ENCODE measurements at regions of chr6 and their contacts with region 1.

Region 1: GRCh38 chr6:27126815-27127537 is 120.5 kb upstream of the PRSS16 start:
- DNase-seq: peak; percentile 93
- ATAC-seq: peak; percentile 68
- H3K4me3 Mint-ChIP-seq: peak overlapping the region; percentile 77
- H3K27ac Mint-ChIP-seq: peak overlapping the region; percentile 95
- H3K4me1 Mint-ChIP-seq: peaks cover 43% of the 10 kb centered on the region
- H3K27me3 Mint-ChIP-seq: no peaks in the 10 kb centered on the region

Region 2: DNA sequence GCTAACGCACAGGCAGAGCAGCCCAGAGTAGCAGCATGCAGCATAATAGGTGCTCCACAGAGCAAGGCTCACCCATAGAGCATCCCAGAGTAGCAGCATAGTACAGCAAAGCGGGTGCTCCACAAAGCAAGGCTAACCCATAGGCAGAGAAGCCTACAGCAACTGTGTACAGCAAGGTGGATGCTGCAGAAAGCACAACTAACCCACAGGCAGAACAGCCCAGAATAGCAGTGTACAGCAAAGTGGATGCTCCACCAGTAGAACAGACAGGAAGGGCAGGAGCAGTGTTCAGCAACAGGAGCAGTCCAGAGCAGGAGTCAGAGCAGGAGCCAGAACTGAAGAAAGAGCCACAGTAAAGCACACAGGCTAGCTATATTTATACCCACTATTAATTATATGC is 12.2 kb before region 1 on chr6:
- CTCF ChIA-PET with region 1: no interaction called
- DNase-seq: no peak
- ATAC-seq: no peak
- H3K4me3 Mint-ChIP-seq: no peak overlapping the region
- H3K27ac Mint-ChIP-seq: no peak overlapping the region
- H3K4me1 Mint-ChIP-seq: no peaks in the 10 kb centered on the region
- H3K27me3 Mint-ChIP-seq: peaks cover 10% of the 10 kb centered on the region

Region 3: DNA sequence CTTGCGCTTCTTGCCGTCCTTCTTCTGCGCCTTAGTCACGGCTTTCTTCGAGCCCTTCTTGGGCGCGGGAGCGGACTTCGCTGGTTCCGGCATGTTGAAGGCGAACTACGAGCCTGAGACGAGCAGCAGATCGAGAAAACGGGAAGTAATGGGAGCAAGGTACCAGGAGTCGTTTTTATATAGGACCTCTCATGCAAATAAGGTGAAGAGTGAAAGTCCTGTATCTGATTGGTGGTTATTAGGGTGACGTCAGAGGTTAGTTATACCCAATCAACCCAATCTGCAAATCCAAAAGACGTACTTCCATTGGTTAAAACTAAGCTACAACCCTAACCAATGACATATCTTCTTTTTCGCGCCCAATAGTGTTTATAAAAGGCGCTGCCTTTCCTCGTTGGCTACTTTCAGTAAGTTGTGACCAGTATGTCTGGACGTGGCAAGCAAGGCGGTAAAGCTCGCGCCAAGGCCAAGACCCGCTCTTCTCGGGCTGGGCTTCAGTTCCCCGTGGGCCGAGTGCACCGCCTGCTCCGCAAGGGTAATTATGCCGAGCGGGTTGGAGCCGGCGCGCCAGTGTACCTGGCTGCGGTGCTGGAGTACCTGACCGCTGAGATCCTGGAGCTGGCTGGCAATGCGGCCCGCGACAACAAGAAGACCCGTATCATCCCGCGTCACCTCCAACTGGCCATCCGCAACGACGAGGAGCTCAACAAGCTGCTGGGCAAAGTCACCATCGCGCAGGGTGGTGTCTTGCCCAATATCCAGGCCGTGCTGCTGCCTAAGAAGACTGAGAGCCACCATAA is 19.9 kb after region 1 on chr6:
- CTCF ChIA-PET with region 1: interaction called, 42 read pairs
- DNase-seq: peak; percentile 92
- ATAC-seq: peak; percentile 68
- H3K4me3 Mint-ChIP-seq: no peak overlapping the region
- H3K27ac Mint-ChIP-seq: no peak overlapping the region
- H3K4me1 Mint-ChIP-seq: peaks cover 25% of the 10 kb centered on the region
- H3K27me3 Mint-ChIP-seq: no peaks in the 10 kb centered on the region

Region 4: DNA sequence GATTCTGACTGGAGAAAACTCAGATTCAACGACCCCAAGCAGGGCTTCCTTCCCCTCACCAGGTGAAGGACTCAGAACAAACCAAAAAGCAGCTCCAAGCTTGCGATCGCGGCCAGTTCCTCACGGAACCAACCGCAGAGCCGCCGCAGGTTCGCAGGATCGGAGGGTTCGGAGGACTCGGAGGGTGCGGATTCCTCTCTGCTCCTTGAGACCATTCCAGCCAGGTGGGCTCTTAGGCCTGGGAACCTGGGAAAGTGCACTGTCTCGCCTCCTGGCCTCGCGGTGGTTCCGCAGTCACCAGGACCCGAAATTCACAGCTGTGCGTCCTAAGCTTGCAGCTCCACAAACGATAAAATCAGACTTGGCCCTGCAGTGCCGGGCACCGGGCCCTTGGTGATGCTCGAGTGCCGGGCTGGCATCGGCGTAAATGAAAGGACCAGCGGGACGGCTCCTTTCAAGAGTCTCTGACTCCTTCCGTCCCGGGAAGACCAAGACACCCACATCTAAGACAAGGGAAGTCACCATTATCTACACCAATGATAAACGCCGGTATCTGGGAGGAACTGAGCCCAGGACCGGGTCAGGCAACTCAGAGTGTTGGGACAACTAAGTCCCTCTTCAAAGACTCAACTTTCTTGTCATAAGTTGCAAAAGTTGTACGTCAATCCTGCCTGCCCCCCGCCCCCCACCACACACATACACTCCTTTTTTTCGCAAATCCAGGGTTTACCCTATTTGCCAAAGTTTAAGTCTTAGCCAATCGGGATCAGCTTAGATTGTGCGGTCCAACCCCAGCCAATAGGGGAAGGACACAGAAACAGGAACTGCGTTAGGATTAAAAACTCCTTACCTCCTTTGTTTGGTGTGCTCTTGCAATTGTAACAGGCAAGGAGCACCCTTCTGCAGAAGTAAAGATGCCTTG is 50.8 kb after region 1 on chr6:
- CTCF ChIA-PET with region 1: interaction called, 19 read pairs
- DNase-seq: peak; percentile 87
- ATAC-seq: peak; percentile 86
- H3K4me3 Mint-ChIP-seq: peak overlapping the region; percentile 91
- H3K27ac Mint-ChIP-seq: peak overlapping the region; percentile 88
- H3K4me1 Mint-ChIP-seq: peaks cover 11% of the 10 kb centered on the region
- H3K27me3 Mint-ChIP-seq: peaks cover 34% of the 10 kb centered on the region

Measured in activated CD8-positive, alpha-beta memory T cell treated with anti-CD3 and anti-CD28 coated beads, Interleukin-2, amount 10 ng/mL, durations not matched to agents 7 days and 5 days (primary cell).